HepG2 (cell line): ENCODE measurements at regions of chr12 and their contacts with region 1.

Region 1: GRCh38 chr12:10673660-10674384 is at the start of gene STYK1:
- DNase-seq: peak; percentile 20
- ATAC-seq: peak; percentile 83
- H3K4me3 ChIP-seq: peak within 1 kb of the TSS; percentile 20 to 65 (median 27); a peak in 5 of 6 replicates
- H3K27ac ChIP-seq: no peak within 1 kb of the TSS
- H3K4me1 ChIP-seq: peaks cover 7% of the 10 kb centered on the region
- H3K27me3 ChIP-seq: peaks cover 0 to 12% of the 10 kb centered on the region in 2 experiments; a peak in 2 of 5 replicates
- CTCF ChIP-seq: peak; percentile 90
- EP300 ChIP-seq: no peak
- POLR2A ChIP-seq: no peak
- RAD21 ChIP-seq: peak; percentile 54; the same call in 1 of the 2 replicates
- total RNA-seq, gene STYK1: not detected in 2 replicates

Region 2: GRCh38 chr12:10235761-10236631 is 437.8 kb before region 1 on chr12:
- CTCF ChIA-PET with region 1: interaction called, 4 read pairs
- POLR2A ChIA-PET with region 1: no interaction called
- in situ Hi-C with region 1: loop called (anchors 5 kb)
- intact Hi-C with region 1: loop called (anchors 1 kb)
- DNase-seq: peak; percentile 17
- ATAC-seq: peak; percentile 67
- H3K4me3 ChIP-seq: no peak overlapping the region
- H3K27ac ChIP-seq: no peak overlapping the region
- H3K4me1 ChIP-seq: no peaks in the 10 kb centered on the region
- H3K27me3 ChIP-seq: 0 out of 5 replicates have a peak, but pooled peaks cover 0 to 1% of the 10 kb centered on the region in 2 experiments
- CTCF ChIP-seq: peak; percentile 81
- EP300 ChIP-seq: no peak
- POLR2A ChIP-seq: no peak
- RAD21 ChIP-seq: 0 out of 2 replicates have a peak, but pooled peaks have one; percentile 37